Activated CD4-positive, alpha-beta memory T cell treated with anti-CD3 and anti-CD28 coated beads for 36 hours (primary cell): ENCODE measurements at regions of chr3 and their contacts with region 1.

Region 1: GRCh38 chr3:52238761-52239701 is at the start of gene TWF2:
- DNase-seq: peak; percentile 90
- H3K4me3 Mint-ChIP-seq: peak within 1 kb of the TSS; percentile 99
- H3K27ac Mint-ChIP-seq: peak within 1 kb of the TSS; percentile 97
- H3K4me1 Mint-ChIP-seq: peaks cover 70% of the 10 kb centered on the region
- H3K27me3 Mint-ChIP-seq: no peaks in the 10 kb centered on the region
- total RNA-seq, gene TWF2: 114 to 118 TPM

Region 2: DNA sequence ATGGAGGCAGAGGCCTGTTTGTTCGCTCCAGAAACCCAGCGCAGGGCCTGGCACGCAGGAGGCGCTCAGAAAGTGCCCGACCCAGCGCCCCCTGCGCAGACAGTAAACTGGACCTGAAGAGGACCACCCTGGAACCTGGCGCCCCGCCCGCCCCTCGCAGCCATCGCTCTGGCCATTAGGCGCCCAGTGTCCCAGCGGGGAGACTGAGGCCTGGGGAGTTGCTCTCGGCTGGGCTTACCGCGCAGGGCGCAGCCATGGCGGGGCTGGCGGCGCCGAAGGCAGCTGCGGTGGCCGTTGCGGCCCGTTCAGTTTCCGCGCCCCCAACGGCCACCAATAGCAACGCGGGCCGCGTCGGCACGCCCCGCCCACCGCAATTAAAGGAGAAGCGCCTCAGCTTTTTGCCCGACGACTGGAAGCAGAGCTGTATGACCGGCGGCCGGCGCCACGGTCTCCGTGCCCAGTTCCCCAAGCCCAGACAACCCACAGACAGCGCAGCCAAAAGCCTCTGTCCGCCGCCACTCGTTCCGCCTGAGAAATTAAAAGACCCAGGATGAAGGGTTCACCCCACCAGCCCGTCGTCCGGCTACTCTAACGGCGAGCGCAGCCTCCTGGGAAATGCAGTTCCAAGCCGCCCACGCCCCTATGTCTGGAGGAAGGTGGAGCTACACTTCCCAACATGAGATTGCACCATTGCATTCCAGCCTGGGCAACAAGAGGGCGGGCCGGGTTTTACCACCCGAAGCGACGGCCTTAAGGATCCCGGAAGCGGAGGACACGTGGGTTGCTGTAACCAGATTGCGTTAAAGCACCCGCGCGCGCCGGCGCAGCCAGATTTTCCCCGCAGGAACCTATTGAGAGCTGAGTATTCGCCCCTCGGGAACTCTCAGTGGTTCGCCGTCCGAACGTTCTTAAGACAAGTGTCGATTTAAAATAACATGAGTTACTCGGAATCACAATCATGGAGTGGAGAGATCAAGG is 84.6 kb before region 1 on chr3 and contains the start of gene POC1A:
- CTCF ChIA-PET with region 1: no interaction called
- POLR2A ChIA-PET with region 1: no interaction called
- intact Hi-C with region 1: loop called (anchors 1 kb)
- DNase-seq: peak; percentile 94
- H3K4me3 Mint-ChIP-seq: peak within 1 kb of the TSS; percentile 88
- H3K27ac Mint-ChIP-seq: peak within 1 kb of the TSS; percentile 89
- H3K4me1 Mint-ChIP-seq: peaks cover 20% of the 10 kb centered on the region
- H3K27me3 Mint-ChIP-seq: no peaks in the 10 kb centered on the region
- total RNA-seq, gene POC1A: 28.5 to 30.5 TPM

Region 3: DNA sequence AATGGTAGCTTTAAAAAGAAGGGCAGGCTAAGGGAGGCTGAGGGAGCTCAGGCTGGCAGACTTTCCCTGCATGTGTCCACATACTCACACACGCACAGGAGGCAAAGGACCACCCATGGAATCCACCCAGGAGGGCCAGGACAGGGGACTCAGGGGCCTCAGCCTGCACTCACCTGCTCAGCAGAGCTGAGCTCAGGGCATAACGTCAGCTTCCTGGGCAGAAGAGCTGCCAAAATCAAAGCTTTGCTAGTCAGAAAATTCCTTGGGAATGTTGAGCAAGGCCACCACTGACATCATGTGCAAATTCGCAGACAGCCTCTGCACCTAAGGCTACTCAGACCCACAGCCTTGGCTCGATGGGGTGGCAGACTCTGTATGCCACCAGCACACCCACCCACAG is 57.5 kb before region 1 on chr3:
- CTCF ChIA-PET with region 1: no interaction called
- POLR2A ChIA-PET with region 1: no interaction called
- intact Hi-C with region 1: no loop called
- DNase-seq: no peak
- H3K4me3 Mint-ChIP-seq: no peak overlapping the region
- H3K27ac Mint-ChIP-seq: no peak overlapping the region
- H3K4me1 Mint-ChIP-seq: no peaks in the 10 kb centered on the region
- H3K27me3 Mint-ChIP-seq: no peaks in the 10 kb centered on the region

Region 4: GRCh38 chr3:52253314-52254304 is 14.6 kb after region 1 on chr3:
- CTCF ChIA-PET with region 1: interaction called, 19 read pairs
- POLR2A ChIA-PET with region 1: interaction called, 87 read pairs
- intact Hi-C with region 1: loop called (anchors 1 kb)
- DNase-seq: peak; percentile 93
- H3K4me3 Mint-ChIP-seq: peak overlapping the region; percentile 71
- H3K27ac Mint-ChIP-seq: peak overlapping the region; percentile 97
- H3K4me1 Mint-ChIP-seq: peaks cover 88% of the 10 kb centered on the region
- H3K27me3 Mint-ChIP-seq: no peaks in the 10 kb centered on the region

Region 5: GRCh38 chr3:52291508-52292181 is 52.6 kb after region 1 on chr3:
- CTCF ChIA-PET with region 1: interaction called, 4 read pairs
- POLR2A ChIA-PET with region 1: interaction called, 12 read pairs
- intact Hi-C with region 1: no loop called
- DNase-seq: peak; percentile 57
- H3K4me3 Mint-ChIP-seq: no peak overlapping the region
- H3K27ac Mint-ChIP-seq: no peak overlapping the region
- H3K4me1 Mint-ChIP-seq: peaks cover 17% of the 10 kb centered on the region
- H3K27me3 Mint-ChIP-seq: no peaks in the 10 kb centered on the region

Region 6: GRCh38 chr3:53230041-53230621 is 991.1 kb after region 1 on chr3:
- CTCF ChIA-PET with region 1: no interaction called
- POLR2A ChIA-PET with region 1: no interaction called
- intact Hi-C with region 1: no loop called
- DNase-seq: no peak
- H3K4me3 Mint-ChIP-seq: no peak overlapping the region
- H3K27ac Mint-ChIP-seq: no peak overlapping the region
- H3K4me1 Mint-ChIP-seq: no peaks in the 10 kb centered on the region
- H3K27me3 Mint-ChIP-seq: no peaks in the 10 kb centered on the region